Endothelial cell of umbilical vein (primary cell): ENCODE measurements at regions of chr1 and their contacts with region 1.

Region 1: GRCh38 chr1:117758444-117759316 is 152.8 kb downstream of the TENT5C start:
- DNase-seq: peak; percentile 86
- H3K4me3 ChIP-seq: peak overlapping the region; percentile 15 to 39 (median 29)
- H3K27ac ChIP-seq: no peak overlapping the region
- H3K4me1 ChIP-seq: peaks cover 8% of the 10 kb centered on the region
- H3K27me3 ChIP-seq: peaks cover 10% of the 10 kb centered on the region in 2 experiments
- CTCF ChIP-seq: peak; percentile 79 to 83
- POLR2A ChIP-seq: no peak

Region 2: DNA sequence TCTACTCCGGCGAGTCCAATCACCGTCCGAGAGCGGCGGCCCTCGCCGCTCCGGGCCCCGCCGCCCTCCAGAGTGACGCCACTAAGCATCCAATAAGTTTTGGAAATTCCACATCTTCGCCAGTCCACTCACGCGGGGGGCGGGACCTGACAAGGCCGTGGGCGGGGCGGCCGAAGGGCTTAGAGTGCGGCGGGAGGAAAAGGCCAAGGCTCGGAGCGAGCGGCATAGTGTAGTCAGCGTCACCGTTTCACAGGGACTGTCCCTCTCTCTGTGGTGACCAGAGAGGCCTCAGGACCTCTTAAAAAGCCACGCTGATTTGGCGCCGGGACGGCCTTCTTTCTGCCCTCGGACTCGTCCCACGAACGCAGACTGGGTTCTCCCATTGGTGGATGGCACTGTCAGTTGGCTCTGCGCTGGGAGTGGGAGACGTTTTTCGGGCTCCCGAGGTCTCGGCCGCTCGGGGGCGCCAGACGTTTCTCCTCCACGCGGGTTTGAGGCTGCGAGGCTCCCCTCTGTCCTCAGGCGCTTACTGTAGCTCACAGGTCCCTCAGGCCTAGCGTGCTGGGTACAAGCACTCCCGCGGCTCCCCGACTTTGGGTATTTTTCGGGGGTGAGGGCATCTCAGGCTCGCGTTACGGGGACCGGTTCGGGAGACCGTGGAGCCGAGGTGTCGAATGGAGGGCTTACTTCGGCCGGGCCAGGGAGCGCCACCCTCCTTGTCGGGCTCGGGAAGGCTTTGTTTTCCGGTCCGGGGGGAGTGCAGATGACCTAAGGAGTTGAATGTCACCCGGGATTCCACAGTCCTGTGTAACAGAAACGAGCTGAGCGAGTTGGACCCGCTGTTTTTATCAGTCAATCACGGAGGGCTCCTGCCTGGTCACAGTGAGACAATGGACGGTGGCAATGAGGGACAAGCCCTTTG is 636.6 kb before region 1 on chr1:
- CTCF ChIA-PET with region 1: interaction called, 4 read pairs
- POLR2A ChIA-PET with region 1: no interaction called
- dilution Hi-C with region 1: no loop called
- intact Hi-C with region 1: loop called (anchors 10 kb)
- DNase-seq: peak; percentile 98
- H3K4me3 ChIP-seq: peak overlapping the region; percentile 48 to 86 (median 74)
- H3K27ac ChIP-seq: peak overlapping the region; percentile 90
- H3K4me1 ChIP-seq: peaks cover 10% of the 10 kb centered on the region
- H3K27me3 ChIP-seq: peaks cover 11 to 25% of the 10 kb centered on the region in 2 experiments
- CTCF ChIP-seq: peak; percentile 88 to 91
- POLR2A ChIP-seq: no peak

Region 3: GRCh38 chr1:117447661-117448060 is 311.0 kb before region 1 on chr1:
- CTCF ChIA-PET with region 1: no interaction called
- POLR2A ChIA-PET with region 1: no interaction called
- dilution Hi-C with region 1: no loop called
- intact Hi-C with region 1: no loop called
- DNase-seq: no peak
- H3K4me3 ChIP-seq: no peak overlapping the region
- H3K27ac ChIP-seq: no peak overlapping the region
- H3K4me1 ChIP-seq: no peaks in the 10 kb centered on the region
- H3K27me3 ChIP-seq: no peaks in the 10 kb centered on the region
- CTCF ChIP-seq: no peak
- POLR2A ChIP-seq: no peak

Region 4: DNA sequence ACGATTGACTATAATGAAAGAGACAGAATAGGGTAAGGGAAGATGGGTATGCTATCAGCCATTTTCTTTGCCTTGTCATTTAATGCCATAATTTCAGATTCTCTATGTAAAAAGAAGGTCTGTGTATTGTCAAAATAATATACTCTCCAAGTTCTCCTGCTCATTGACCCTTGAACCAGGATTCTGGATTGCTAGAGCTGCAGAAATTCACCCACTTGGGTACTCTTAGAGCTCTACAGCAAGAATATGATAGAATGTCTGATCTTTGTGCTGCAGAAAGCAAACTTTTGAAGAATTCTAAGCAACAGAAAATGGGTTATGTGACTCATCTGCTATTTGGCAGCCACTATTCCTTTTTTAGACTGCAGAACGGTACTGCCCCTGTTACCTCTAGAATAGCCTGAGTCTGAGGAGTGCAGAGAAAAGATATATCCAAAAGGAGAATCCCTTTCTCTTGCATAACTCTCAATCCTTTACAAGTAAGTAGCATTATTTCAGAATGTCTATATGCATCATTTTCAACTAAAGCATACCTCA is 231.0 kb before region 1 on chr1:
- CTCF ChIA-PET with region 1: interaction called, 398 read pairs
- POLR2A ChIA-PET with region 1: no interaction called
- dilution Hi-C with region 1: loop called (anchors 25 kb)
- intact Hi-C with region 1: no loop called
- DNase-seq: no peak
- H3K4me3 ChIP-seq: no peak overlapping the region
- H3K27ac ChIP-seq: no peak overlapping the region
- H3K4me1 ChIP-seq: no peaks in the 10 kb centered on the region
- H3K27me3 ChIP-seq: no peaks in the 10 kb centered on the region
- CTCF ChIP-seq: no peak
- POLR2A ChIP-seq: no peak

Region 5: GRCh38 chr1:117605774-117606648 is 152.7 kb before region 1 on chr1 and contains the start of gene TENT5C:
- CTCF ChIA-PET with region 1: interaction called, 67 read pairs
- POLR2A ChIA-PET with region 1: no interaction called
- dilution Hi-C with region 1: no loop called
- intact Hi-C with region 1: loop called (anchors 2 kb)
- DNase-seq: peak; percentile 96
- H3K4me3 ChIP-seq: peak within 1 kb of the TSS; percentile 68 to 87 (median 82)
- H3K27ac ChIP-seq: no peak within 1 kb of the TSS
- H3K4me1 ChIP-seq: peaks cover 15% of the 10 kb centered on the region
- H3K27me3 ChIP-seq: peaks cover 29 to 44% of the 10 kb centered on the region in 2 experiments
- CTCF ChIP-seq: no peak
- POLR2A ChIP-seq: peak; percentile 61
- total RNA-seq, gene TENT5C: 0.12 and 0.22 TPM in 2 replicates

Region 6: DNA sequence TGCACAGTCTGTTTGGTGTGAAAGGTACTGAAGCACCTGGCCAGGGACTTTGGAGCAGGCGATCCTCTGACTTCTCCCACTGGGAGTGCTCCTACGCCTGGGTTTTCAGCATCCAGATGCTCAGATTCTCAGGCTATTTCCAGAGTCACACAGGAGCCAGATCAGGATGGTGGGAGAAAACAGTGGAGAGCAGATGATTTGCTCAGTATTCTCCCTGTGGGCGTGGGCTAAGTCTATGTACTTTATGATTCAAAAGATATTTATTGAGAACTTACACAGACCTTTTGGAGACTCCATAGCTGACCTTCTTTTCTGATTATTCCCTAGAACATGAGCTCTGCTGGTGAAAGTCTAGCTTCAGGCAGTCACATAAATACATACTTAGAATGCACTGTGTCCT is 18.2 kb before region 1 on chr1:
- CTCF ChIA-PET with region 1: interaction called, 51 read pairs
- POLR2A ChIA-PET with region 1: no interaction called
- dilution Hi-C with region 1: no loop called
- intact Hi-C with region 1: no loop called
- DNase-seq: no peak
- H3K4me3 ChIP-seq: no peak overlapping the region
- H3K27ac ChIP-seq: no peak overlapping the region
- H3K4me1 ChIP-seq: no peaks in the 10 kb centered on the region
- H3K27me3 ChIP-seq: no peaks in the 10 kb centered on the region
- CTCF ChIP-seq: no peak
- POLR2A ChIP-seq: no peak

Region 7: DNA sequence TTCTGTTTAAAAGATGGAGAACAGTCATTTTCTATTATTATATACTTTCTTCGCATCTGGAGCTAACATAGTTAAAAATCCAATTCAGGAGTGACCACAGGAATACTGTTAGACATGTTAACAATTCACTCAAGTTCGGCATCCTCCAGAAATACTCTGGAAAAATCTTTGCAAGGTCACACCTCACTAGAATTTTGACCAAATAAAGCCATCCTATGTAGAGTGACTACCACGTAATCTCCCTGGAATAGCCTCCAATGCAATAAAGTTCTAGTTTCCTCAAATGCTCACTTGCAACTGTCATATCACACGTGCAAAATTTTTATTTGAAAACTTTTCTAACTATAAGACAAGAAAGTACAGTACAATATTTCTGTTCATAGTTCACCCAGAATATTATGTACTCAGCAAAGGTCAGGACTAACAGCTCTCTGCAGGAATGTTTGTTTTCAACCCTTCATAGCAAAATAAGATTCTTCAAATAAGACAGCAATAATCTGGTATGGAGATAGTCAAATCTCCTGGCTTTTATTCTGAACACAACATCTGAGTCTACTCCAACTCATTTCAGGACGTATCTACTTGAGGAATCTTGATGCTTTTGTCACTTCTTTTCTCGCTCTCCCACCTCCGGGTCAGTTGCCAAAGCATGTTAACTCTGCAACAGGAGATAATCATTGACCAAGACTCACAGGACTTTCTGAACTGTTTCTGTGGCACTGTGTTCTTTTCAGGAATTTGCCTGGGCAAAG is 88.2 kb after region 1 on chr1:
- CTCF ChIA-PET with region 1: no interaction called
- POLR2A ChIA-PET with region 1: no interaction called
- dilution Hi-C with region 1: no loop called
- intact Hi-C with region 1: no loop called
- DNase-seq: no peak
- H3K4me3 ChIP-seq: no peak overlapping the region
- H3K27ac ChIP-seq: no peak overlapping the region
- H3K4me1 ChIP-seq: no peaks in the 10 kb centered on the region
- H3K27me3 ChIP-seq: no peaks in the 10 kb centered on the region
- CTCF ChIP-seq: no peak
- POLR2A ChIP-seq: no peak

Region 8: GRCh38 chr1:118042501-118042900 is 283.8 kb after region 1 on chr1:
- CTCF ChIA-PET with region 1: no interaction called
- POLR2A ChIA-PET with region 1: no interaction called
- dilution Hi-C with region 1: no loop called
- intact Hi-C with region 1: no loop called
- DNase-seq: no peak
- H3K4me3 ChIP-seq: no peak overlapping the region
- H3K27ac ChIP-seq: no peak overlapping the region
- H3K4me1 ChIP-seq: no peaks in the 10 kb centered on the region
- H3K27me3 ChIP-seq: no peaks in the 10 kb centered on the region
- CTCF ChIP-seq: no peak
- POLR2A ChIP-seq: no peak

Region 9: DNA sequence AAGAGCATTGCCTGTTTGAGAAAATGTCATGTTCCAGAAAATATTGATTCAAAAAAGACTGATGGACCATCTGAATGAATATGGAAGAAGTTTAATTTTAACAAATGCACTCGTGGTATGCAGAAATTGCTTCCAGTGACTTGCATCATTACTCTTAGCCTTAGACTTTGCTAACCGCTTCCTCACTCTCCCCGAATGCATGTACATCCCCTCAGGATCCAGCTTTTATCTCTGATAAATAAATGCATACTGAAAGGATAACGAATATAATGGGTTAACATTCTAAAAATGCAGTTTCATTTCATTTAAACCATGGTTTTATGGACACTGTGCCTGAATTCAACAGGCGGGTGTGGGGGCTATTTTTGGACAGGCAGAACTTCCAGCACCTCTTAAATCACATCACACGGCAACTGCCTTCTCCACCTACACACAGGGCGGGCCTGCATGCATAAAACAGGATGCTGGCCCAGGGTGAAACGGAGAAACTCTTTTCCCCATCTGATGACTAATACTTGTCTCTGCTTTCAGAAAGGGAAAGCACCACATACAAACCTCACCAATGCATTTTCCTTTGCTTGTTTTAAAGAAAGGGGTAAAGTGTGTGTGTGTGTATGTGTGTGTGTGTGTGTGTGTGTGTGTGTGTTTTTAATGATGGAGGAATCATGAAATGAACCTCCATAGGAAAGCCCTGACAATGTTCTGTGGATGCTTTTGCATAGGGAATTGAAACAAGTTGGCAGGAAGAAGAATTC is 377.7 kb after region 1 on chr1:
- CTCF ChIA-PET with region 1: no interaction called
- POLR2A ChIA-PET with region 1: no interaction called
- dilution Hi-C with region 1: no loop called
- intact Hi-C with region 1: no loop called
- DNase-seq: no peak
- H3K4me3 ChIP-seq: no peak overlapping the region
- H3K27ac ChIP-seq: no peak overlapping the region
- H3K4me1 ChIP-seq: no peaks in the 10 kb centered on the region
- H3K27me3 ChIP-seq: no peaks in the 10 kb centered on the region
- CTCF ChIP-seq: no peak
- POLR2A ChIP-seq: no peak